Caco-2 (cell line): ENCODE measurements at regions of chr4 and their contacts with region 1.

Region 1: DNA sequence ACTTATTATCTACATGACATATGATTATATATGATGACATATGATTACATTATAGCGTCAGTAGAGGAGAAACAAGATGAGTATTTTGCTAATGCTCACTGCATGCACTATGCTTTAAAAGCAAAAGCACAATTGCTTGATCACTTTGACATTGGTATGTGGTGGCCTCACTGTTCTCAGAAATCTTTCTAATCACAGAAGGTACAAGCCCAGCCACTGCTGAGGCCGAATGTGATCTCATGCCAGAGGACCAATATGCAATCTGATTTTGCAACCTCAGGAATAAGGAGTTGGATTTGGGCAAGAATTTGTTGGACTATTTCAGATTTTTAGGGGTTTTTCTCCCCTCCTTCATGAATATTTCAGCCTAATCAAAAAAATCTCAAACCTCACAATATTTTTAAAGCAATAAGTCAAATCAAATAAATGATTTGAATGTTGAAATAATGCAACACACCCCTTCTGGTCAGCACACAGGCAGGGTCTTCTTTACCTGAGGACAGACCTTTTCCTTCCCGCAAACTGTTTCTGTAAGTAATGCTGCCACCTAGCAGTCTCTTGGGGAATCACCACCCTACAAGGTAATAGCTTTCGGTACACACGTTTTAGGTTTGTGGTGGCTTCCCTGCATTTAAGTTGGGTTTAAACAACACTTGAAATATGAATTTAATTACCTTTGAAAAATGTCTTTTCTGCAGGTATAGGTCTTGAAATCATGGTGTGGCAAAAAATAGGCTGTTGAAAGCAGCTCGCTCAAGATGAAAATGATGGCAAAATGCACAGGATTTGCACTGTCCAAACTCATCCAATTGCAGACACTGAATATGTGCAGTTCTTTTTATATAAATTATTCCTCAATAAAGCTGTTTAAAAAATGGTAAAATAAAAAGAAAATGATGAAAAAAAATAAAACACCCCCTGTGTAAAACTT is 4.8 kb upstream of the CXCL13 start:
- DNase-seq: peak in 1 of 2 experiments; percentile 35
- H3K4me3 ChIP-seq: no peak overlapping the region
- H3K4me3 Mint-ChIP-seq: no peak overlapping the region
- H3K27ac Mint-ChIP-seq: no peak overlapping the region
- H3K4me1 ChIP-seq: no peaks in the 10 kb centered on the region
- H3K4me1 Mint-ChIP-seq: no peaks in the 10 kb centered on the region
- H3K27me3 ChIP-seq: no peaks in the 10 kb centered on the region
- H3K27me3 Mint-ChIP-seq: peaks cover 15% of the 10 kb centered on the region
- CTCF ChIP-seq: peak; percentile 61 to 79

Region 2: GRCh38 chr4:77308843-77309242 is 291.9 kb before region 1 on chr4:
- CTCF ChIA-PET with region 1: no interaction called
- POLR2A ChIA-PET with region 1: no interaction called
- intact Hi-C with region 1: no loop called
- DNase-seq: peak in 1 of 2 experiments; percentile 11
- H3K4me3 ChIP-seq: no peak overlapping the region
- H3K4me3 Mint-ChIP-seq: no peak overlapping the region
- H3K27ac Mint-ChIP-seq: no peak overlapping the region
- H3K4me1 ChIP-seq: no peaks in the 10 kb centered on the region
- H3K4me1 Mint-ChIP-seq: no peaks in the 10 kb centered on the region
- H3K27me3 ChIP-seq: no peaks in the 10 kb centered on the region
- H3K27me3 Mint-ChIP-seq: no peaks in the 10 kb centered on the region
- CTCF ChIP-seq: peak in 1 of 2 experiments; percentile 45

Region 3: DNA sequence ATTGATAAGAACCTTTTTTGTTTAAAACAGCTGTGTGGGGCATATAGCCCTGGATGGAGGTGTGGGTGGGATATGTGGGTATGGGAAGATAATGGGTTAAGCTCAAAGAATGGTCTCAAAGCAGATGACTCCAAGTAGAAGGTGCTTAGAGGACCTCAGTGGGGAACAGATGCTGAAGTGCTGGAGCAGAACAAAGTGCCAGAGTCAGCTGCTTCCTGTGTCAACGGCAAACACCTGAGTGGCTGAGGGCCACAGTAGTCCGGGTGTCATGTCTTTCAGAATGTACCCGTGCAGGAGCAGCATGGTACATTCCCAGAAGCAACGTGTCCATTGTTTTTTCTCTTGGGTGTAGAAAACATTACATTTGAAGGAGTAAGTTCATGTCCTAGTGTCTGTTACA is 233.1 kb before region 1 on chr4:
- CTCF ChIA-PET with region 1: no interaction called
- POLR2A ChIA-PET with region 1: no interaction called
- intact Hi-C with region 1: loop called (anchors 5 kb)
- DNase-seq: no peak
- H3K4me3 ChIP-seq: no peak overlapping the region
- H3K4me3 Mint-ChIP-seq: no peak overlapping the region
- H3K27ac Mint-ChIP-seq: no peak overlapping the region
- H3K4me1 ChIP-seq: no peaks in the 10 kb centered on the region
- H3K4me1 Mint-ChIP-seq: no peaks in the 10 kb centered on the region
- H3K27me3 ChIP-seq: no peaks in the 10 kb centered on the region
- H3K27me3 Mint-ChIP-seq: peaks cover 12% of the 10 kb centered on the region
- CTCF ChIP-seq: no peak

Region 4: DNA sequence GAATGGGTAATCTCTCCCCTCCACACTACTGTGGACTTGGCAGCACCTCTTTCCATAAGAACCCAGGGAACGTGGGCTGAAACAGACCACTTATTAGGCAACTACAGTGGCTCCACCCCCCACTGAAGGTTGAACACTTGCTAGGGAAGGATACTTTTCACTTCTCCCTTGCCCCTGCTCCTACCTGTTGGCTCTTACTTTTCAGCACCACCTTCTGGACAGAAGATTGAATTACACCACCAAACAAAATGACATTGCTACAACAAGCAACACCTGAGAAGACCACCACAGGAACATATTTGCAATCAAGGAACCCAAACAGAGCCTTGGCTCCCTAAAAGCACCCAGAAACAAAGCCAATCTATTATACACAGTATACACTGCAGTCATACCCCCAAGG is 127.3 kb before region 1 on chr4:
- CTCF ChIA-PET with region 1: interaction called, 5 read pairs
- POLR2A ChIA-PET with region 1: no interaction called
- intact Hi-C with region 1: loop called (anchors 10 kb)
- DNase-seq: peak in 1 of 2 experiments; percentile 8
- H3K4me3 ChIP-seq: no peak overlapping the region
- H3K4me3 Mint-ChIP-seq: no peak overlapping the region
- H3K27ac Mint-ChIP-seq: no peak overlapping the region
- H3K4me1 ChIP-seq: no peaks in the 10 kb centered on the region
- H3K4me1 Mint-ChIP-seq: no peaks in the 10 kb centered on the region
- H3K27me3 ChIP-seq: no peaks in the 10 kb centered on the region
- H3K27me3 Mint-ChIP-seq: peaks cover 14% of the 10 kb centered on the region
- CTCF ChIP-seq: peak; percentile 12 to 36

Region 5: DNA sequence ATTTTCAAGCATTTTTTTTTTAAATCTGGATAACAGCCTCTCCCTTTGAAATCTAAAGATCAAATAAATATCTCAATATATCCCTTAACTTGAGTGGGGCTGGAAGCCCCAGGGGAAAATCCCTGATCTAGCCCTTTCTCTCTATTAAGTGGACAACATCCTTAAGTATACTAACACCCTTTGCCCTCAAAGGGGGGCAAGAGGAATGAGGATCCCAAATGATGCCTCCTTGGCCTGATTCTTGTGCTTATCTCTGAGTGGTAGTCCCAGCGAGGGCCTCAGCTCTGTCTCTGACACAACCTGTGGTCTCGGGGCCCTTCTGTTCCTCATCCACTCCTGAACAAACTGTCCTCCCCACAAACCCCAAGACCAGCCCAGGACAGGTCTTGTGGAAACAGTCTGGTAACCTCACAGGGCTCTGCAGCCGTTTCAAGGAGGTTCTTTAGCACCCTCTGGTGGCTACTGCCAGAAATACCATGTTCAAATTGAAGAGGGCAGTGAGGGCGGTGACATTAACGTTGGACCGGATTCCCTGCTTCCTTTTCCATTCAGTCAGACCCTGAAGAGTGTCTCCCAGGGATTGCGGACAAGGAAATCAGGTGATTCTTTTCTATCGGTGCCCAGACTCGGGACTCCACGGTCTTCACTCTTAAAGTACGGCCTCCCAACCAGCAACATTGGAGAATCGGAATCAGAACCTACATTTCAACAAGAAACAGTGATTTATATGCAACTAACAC is 17.8 kb after region 1 on chr4:
- CTCF ChIA-PET with region 1: interaction called, 3 read pairs
- POLR2A ChIA-PET with region 1: no interaction called
- intact Hi-C with region 1: loop called (anchors 1 kb)
- DNase-seq: peak; percentile 65 to 73
- H3K4me3 ChIP-seq: no peak overlapping the region
- H3K4me3 Mint-ChIP-seq: no peak overlapping the region
- H3K27ac Mint-ChIP-seq: no peak overlapping the region
- H3K4me1 ChIP-seq: no peaks in the 10 kb centered on the region
- H3K4me1 Mint-ChIP-seq: no peaks in the 10 kb centered on the region
- H3K27me3 ChIP-seq: no peaks in the 10 kb centered on the region; the same call in 1 of the 2 replicates
- H3K27me3 Mint-ChIP-seq: peaks cover 7% of the 10 kb centered on the region
- CTCF ChIP-seq: peak; percentile 69 to 84